ENCODE measurements at regions of chr12 and their contacts with region 1.

Region 1: GRCh38 chr12:6867413-6868210 is at the start of gene TPI1:
- DNase-seq: peak; percentile 78 to 91 (median 81)
- ATAC-seq: peak; percentile 83
- H3K4me3 ChIP-seq: peak within 1 kb of the TSS; percentile 96
- H3K27ac ChIP-seq: peak within 1 kb of the TSS; percentile 94
- H3K4me1 ChIP-seq: peaks cover 33 to 53% of the 10 kb centered on the region in 2 experiments; a peak in 4 of 5 replicates
- H3K27me3 ChIP-seq: no peaks in the 10 kb centered on the region
- CTCF ChIP-seq: 0 out of 6 replicates have a peak, but pooled peaks of 1 of the 3 experiments have one; percentile 3
- EP300 ChIP-seq: no peak
- POLR2A ChIP-seq: peak; percentile 99
- RAD21 ChIP-seq: no peak
- polyA plus RNA-seq, gene TPI1: 4,965 to 4,971 TPM

Region 2: GRCh38 chr12:6937481-6938297 is 70.1 kb after region 1 on chr12:
- CTCF ChIA-PET with region 1: no interaction called
- POLR2A ChIA-PET with region 1: interaction called, 24 read pairs
- in situ Hi-C with region 1: loop called (anchors 5 kb)
- intact Hi-C with region 1: loop called (anchors 5 kb)
- DNase-seq: peak; percentile 61 to 95 (median 72)
- ATAC-seq: peak; percentile 95
- H3K4me3 ChIP-seq: peak overlapping the region; percentile 44
- H3K27ac ChIP-seq: peak overlapping the region; percentile 92
- H3K4me1 ChIP-seq: peaks cover 10 to 55% of the 10 kb centered on the region in 2 experiments; a peak in 4 of 5 replicates
- H3K27me3 ChIP-seq: no peaks in the 10 kb centered on the region
- CTCF ChIP-seq: peak; percentile 82 to 91 (median 86)
- EP300 ChIP-seq: no peak
- POLR2A ChIP-seq: peak; percentile 81
- RAD21 ChIP-seq: peak; percentile 27 to 55